ENCODE measurements at regions of chr11 and their contacts with region 1.

Region 1: GRCh38 chr11:62726915-62727763 is at the start of gene HNRNPUL2:
- DNase-seq: peak; percentile 99
- ATAC-seq: peak; percentile 79
- H3K4me3 ChIP-seq: peak within 1 kb of the TSS; percentile 96 to 100 (median 99)
- H3K4me3 Mint-ChIP-seq: peak within 1 kb of the TSS; percentile 95
- H3K27ac ChIP-seq: peak within 1 kb of the TSS; percentile 90 to 91
- H3K27ac Mint-ChIP-seq: peak within 1 kb of the TSS; percentile 99
- H3K4me1 ChIP-seq: peaks cover 37 to 41% of the 10 kb centered on the region in 2 donors
- H3K4me1 Mint-ChIP-seq: peaks cover 53% of the 10 kb centered on the region
- H3K27me3 ChIP-seq: no peaks in the 10 kb centered on the region
- H3K27me3 Mint-ChIP-seq: no peaks in the 10 kb centered on the region
- CTCF ChIP-seq: no peak
- total RNA-seq, gene HNRNPUL2: 70.4 and 78.2 TPM in 2 replicates

Region 2: GRCh38 chr11:62652161-62653006 is 74.8 kb before region 1 on chr11:
- CTCF ChIA-PET with region 1: no interaction called
- POLR2A ChIA-PET with region 1: interaction called, 3 read pairs
- intact Hi-C with region 1: loop called (anchors 1 kb)
- DNase-seq: no peak
- ATAC-seq: no peak
- H3K4me3 ChIP-seq: peak overlapping the region; percentile 74 to 90 (median 83)
- H3K4me3 Mint-ChIP-seq: peak overlapping the region; percentile 94
- H3K27ac ChIP-seq: peak overlapping the region; percentile 68 to 89
- H3K27ac Mint-ChIP-seq: peak overlapping the region; percentile 97
- H3K4me1 ChIP-seq: peaks cover 14 to 18% of the 10 kb centered on the region in 2 donors
- H3K4me1 Mint-ChIP-seq: peaks cover 22% of the 10 kb centered on the region
- H3K27me3 ChIP-seq: no peaks in the 10 kb centered on the region
- H3K27me3 Mint-ChIP-seq: no peaks in the 10 kb centered on the region
- CTCF ChIP-seq: no peak

Region 3: DNA sequence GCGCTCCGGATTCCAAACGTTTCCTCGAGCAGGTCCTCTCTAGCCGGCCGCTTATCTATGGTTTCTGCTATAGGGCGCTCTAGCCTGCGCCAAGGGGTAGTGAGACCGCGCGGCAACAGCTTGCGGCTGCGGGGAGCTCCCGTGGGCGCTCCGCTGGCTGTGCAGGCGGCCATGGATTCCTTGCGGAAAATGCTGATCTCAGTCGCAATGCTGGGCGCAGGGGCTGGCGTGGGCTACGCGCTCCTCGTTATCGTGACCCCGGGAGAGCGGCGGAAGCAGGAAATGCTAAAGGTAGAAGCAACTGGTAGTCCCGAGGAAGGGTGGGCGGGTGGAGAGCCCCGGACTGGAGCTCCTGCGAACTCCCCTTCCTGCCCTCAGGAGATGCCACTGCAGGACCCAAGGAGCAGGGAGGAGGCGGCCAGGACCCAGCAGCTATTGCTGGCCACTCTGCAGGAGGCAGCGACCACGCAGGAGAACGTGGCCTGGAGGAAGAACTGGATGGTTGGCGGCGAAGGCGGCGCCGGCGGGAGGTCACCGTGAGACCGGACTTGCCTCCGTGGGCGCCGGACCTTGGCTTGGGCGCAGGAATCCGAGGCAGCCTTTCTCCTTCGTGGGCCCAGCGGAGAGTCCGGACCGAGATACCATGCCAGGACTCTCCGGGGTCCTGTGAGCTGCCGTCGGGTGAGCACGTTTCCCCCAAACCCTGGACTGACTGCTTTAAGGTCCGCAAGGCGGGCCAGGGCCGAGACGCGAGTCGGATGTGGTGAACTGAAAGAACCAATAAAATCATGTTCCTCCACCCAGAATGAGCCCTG is 55.4 kb before region 1 on chr11 and contains the starts of genes LBHD1 and UQCC3:
- CTCF ChIA-PET with region 1: no interaction called
- POLR2A ChIA-PET with region 1: interaction called, 8 read pairs
- intact Hi-C with region 1: loop called (anchors 2 kb)
- DNase-seq: peak; percentile 86
- ATAC-seq: peak; percentile 77
- H3K4me3 ChIP-seq: peak within 1 kb of the TSS; percentile 85 to 97 (median 87)
- H3K4me3 Mint-ChIP-seq: peak within 1 kb of the TSS; percentile 100
- H3K27ac ChIP-seq: peak within 1 kb of the TSS; percentile 56 to 71
- H3K27ac Mint-ChIP-seq: peak within 1 kb of the TSS; percentile 97
- H3K4me1 ChIP-seq: peaks cover 21 to 36% of the 10 kb centered on the region in 2 donors
- H3K4me1 Mint-ChIP-seq: peaks cover 48% of the 10 kb centered on the region
- H3K27me3 ChIP-seq: no peaks in the 10 kb centered on the region
- H3K27me3 Mint-ChIP-seq: no peaks in the 10 kb centered on the region
- CTCF ChIP-seq: no peak
- total RNA-seq, gene LBHD1: 32.5 and 33.3 TPM in 2 replicates
- total RNA-seq, gene UQCC3: 6.5 and 8.9 TPM in 2 replicates

Region 4: GRCh38 chr11:62753736-62754603 is 26.8 kb after region 1 on chr11 and contains the start of gene ZBTB3:
- CTCF ChIA-PET with region 1: interaction called, 12 read pairs
- POLR2A ChIA-PET with region 1: interaction called, 75 read pairs
- intact Hi-C with region 1: loop called (anchors 1 kb)
- DNase-seq: peak; percentile 99
- ATAC-seq: peak; percentile 92
- H3K4me3 ChIP-seq: peak within 1 kb of the TSS; percentile 82 to 94 (median 86)
- H3K4me3 Mint-ChIP-seq: peak within 1 kb of the TSS; percentile 99
- H3K27ac ChIP-seq: peak within 1 kb of the TSS; percentile 80 to 84
- H3K27ac Mint-ChIP-seq: peak within 1 kb of the TSS; percentile 99
- H3K4me1 ChIP-seq: peaks cover 7 to 21% of the 10 kb centered on the region in 2 donors
- H3K4me1 Mint-ChIP-seq: peaks cover 27% of the 10 kb centered on the region
- H3K27me3 ChIP-seq: no peaks in the 10 kb centered on the region
- H3K27me3 Mint-ChIP-seq: no peaks in the 10 kb centered on the region
- CTCF ChIP-seq: no peak
- total RNA-seq, gene ZBTB3: 22.0 and 24.8 TPM in 2 replicates

Region 5: GRCh38 chr11:62787005-62787759 is 60.0 kb after region 1 on chr11 and contains the start of gene TMEM179B:
- CTCF ChIA-PET with region 1: interaction called, 34 read pairs
- POLR2A ChIA-PET with region 1: interaction called, 30 read pairs
- intact Hi-C with region 1: loop called (anchors 1 kb)
- DNase-seq: peak; percentile 98
- ATAC-seq: peak; percentile 70
- H3K4me3 ChIP-seq: peak within 1 kb of the TSS; percentile 87 to 97 (median 94)
- H3K4me3 Mint-ChIP-seq: peak within 1 kb of the TSS; percentile 97
- H3K27ac ChIP-seq: peak within 1 kb of the TSS; percentile 68 to 78
- H3K27ac Mint-ChIP-seq: peak within 1 kb of the TSS; percentile 96
- H3K4me1 ChIP-seq: peaks cover 27 to 35% of the 10 kb centered on the region in 2 donors
- H3K4me1 Mint-ChIP-seq: peaks cover 48% of the 10 kb centered on the region
- H3K27me3 ChIP-seq: no peaks in the 10 kb centered on the region
- H3K27me3 Mint-ChIP-seq: no peaks in the 10 kb centered on the region
- CTCF ChIP-seq: peak; percentile 65
- total RNA-seq, gene TMEM179B: 62.3 and 71.5 TPM in 2 replicates

Region 6: DNA sequence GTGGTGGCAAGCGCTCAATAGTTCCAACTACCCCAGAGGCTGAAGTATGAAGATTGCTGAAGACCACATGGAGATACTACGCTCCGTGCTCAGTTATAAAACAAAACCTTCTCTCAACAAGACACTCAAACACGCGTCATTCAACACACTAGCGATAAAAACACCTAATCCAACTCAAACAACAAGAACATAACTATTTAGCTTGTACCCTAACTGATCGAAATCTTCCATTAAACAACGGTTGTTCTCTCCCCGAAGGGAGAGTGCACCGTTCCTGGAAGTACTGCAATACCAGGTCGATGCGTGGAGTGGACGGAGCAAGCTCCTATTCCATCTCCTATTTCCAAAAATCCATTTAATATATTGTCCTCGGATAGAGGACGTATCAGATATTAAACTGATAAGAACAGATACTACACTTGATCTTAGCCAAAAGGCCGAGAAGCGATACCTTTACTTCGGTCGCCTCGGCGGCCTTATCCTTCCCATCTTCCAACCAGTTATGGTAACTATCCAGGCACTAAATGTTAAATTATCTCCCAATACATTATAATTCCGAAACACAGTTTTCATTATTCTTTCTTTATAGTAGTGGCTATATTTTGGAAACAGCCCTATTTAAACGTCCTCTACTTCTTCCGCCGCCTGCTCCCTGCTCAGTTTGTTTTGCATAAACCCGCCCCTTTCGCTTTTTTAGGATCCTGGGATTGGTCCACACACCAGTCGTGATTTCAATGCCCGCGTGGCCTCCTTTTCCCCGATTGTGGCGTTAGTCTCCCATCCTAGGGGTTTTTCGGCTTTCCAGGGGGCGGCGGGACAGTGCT is 114.4 kb after region 1 on chr11:
- CTCF ChIA-PET with region 1: interaction called, 3 read pairs
- POLR2A ChIA-PET with region 1: interaction called, 72 read pairs
- intact Hi-C with region 1: loop called (anchors 1 kb)
- DNase-seq: peak; percentile 95
- ATAC-seq: peak; percentile 58
- H3K4me3 ChIP-seq: peak overlapping the region; percentile 61 to 97 (median 91)
- H3K4me3 Mint-ChIP-seq: no peak overlapping the region
- H3K27ac ChIP-seq: peak overlapping the region; percentile 99 to 100
- H3K27ac Mint-ChIP-seq: no peak overlapping the region
- H3K4me1 ChIP-seq: peaks cover 14 to 33% of the 10 kb centered on the region in 2 donors
- H3K4me1 Mint-ChIP-seq: peaks cover 18% of the 10 kb centered on the region
- H3K27me3 ChIP-seq: no peaks in the 10 kb centered on the region
- H3K27me3 Mint-ChIP-seq: no peaks in the 10 kb centered on the region
- CTCF ChIP-seq: no peak